Activated CD8-positive, alpha-beta T cell treated with anti-CD3 and anti-CD28 coated beads for 36 hours (primary cell): ENCODE measurements at regions of chr4 and their contacts with region 1.

Region 1: DNA sequence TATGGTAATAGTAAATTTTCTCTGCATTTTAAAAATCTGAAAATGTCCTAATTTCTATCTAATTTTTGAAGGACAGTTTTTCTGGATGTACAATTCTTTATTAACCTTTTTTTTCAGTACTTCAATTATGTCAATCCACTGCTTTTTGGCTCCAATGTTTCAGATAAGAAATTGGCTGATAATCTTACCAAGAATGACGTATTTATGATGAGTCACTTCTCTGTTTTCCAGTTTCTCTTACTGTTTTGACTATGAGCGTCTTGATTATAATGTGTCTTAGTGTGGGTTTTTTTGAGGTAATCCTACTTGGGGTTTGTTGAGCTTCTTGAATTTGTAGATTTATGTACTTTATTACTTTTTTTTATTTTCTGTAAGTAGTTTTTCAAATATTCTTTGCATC is 47.2 kb downstream of the UGT2B11 start:
- DNase-seq: no peak
- ATAC-seq: no peak
- H3K4me3 Mint-ChIP-seq: no peak overlapping the region
- H3K27ac Mint-ChIP-seq: no peak overlapping the region
- H3K4me1 Mint-ChIP-seq: no peaks in the 10 kb centered on the region
- H3K27me3 Mint-ChIP-seq: no peaks in the 10 kb centered on the region
- CTCF ChIP-seq: no peak

Region 2: GRCh38 chr4:68498413-68499007 is 668.8 kb before region 1 on chr4:
- CTCF ChIA-PET with region 1: interaction called, 3 read pairs
- POLR2A ChIA-PET with region 1: no interaction called
- intact Hi-C with region 1: loop called (anchors 5 kb)
- DNase-seq: peak; percentile 73
- ATAC-seq: peak; percentile 97
- H3K4me3 Mint-ChIP-seq: no peak overlapping the region
- H3K27ac Mint-ChIP-seq: no peak overlapping the region
- H3K4me1 Mint-ChIP-seq: peaks cover 3% of the 10 kb centered on the region
- H3K27me3 Mint-ChIP-seq: no peaks in the 10 kb centered on the region
- CTCF ChIP-seq: peak; percentile 86

Region 3: GRCh38 chr4:69133993-69134392 is 33.3 kb before region 1 on chr4:
- CTCF ChIA-PET with region 1: no interaction called
- POLR2A ChIA-PET with region 1: no interaction called
- intact Hi-C with region 1: no loop called
- DNase-seq: no peak
- ATAC-seq: no peak
- H3K4me3 Mint-ChIP-seq: no peak overlapping the region
- H3K27ac Mint-ChIP-seq: no peak overlapping the region
- H3K4me1 Mint-ChIP-seq: no peaks in the 10 kb centered on the region
- H3K27me3 Mint-ChIP-seq: no peaks in the 10 kb centered on the region
- CTCF ChIP-seq: no peak